SK-N-SH (cell line): ENCODE measurements at regions of chr7 and their contacts with region 1.

Region 1: GRCh38 chr7:92833024-92833765 is 3.2 kb downstream of the CDK6 start:
- DNase-seq: peak; percentile 90
- H3K4me3 ChIP-seq: peak overlapping the region; percentile 80 to 88
- H3K27ac ChIP-seq: peak overlapping the region; percentile 95 to 96
- H3K4me1 ChIP-seq: peaks cover 34 to 40% of the 10 kb centered on the region in 2 experiments; a peak in 3 of 4 replicates
- H3K27me3 ChIP-seq: no peaks in the 10 kb centered on the region
- CTCF ChIP-seq: peak; percentile 82
- EP300 ChIP-seq: peak in 1 of 2 experiments; percentile 24; a peak in 1 of 4 replicates
- RAD21 ChIP-seq: peak; percentile 84

Region 2: GRCh38 chr7:92576296-92576695 is 256.9 kb before region 1 on chr7:
- CTCF ChIA-PET with region 1: no interaction called
- POLR2A ChIA-PET with region 1: no interaction called
- DNase-seq: no peak
- H3K4me3 ChIP-seq: no peak overlapping the region
- H3K27ac ChIP-seq: no peak overlapping the region
- H3K4me1 ChIP-seq: no peaks in the 10 kb centered on the region
- H3K27me3 ChIP-seq: no peaks in the 10 kb centered on the region
- CTCF ChIP-seq: no peak
- EP300 ChIP-seq: no peak
- RAD21 ChIP-seq: no peak

Region 3: DNA sequence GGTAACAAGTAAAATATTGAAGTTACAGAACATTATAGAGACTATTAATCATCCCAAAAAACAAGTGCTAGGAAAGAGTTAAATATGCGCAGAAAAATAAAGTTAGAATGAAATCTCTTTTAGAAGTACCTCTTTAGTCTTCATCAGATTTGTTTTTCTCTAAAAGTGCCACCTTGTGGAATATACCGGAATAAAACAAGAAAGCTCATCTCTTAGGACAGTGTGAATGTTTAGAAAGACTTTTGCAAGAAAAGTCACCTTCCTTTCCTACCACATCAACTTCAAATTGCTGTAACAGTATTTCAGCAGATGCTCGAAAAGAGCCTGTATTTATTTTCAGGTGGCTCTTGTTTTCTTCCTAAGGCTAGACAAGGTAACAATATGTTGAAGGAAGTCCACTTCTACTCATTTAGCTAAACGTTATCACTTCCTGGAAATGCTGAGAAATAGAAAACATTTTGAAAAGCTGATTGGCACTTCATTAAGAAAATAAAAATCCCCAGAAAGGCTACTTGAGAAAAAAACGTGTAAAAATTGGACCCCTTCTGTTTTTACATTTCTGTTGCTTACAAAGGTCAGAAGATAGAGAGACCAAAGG is 223.2 kb before region 1 on chr7:
- CTCF ChIA-PET with region 1: interaction called, 96 read pairs
- POLR2A ChIA-PET with region 1: no interaction called
- DNase-seq: peak; percentile 43
- H3K4me3 ChIP-seq: no peak overlapping the region
- H3K27ac ChIP-seq: peak overlapping the region in 1 of 2 experiments; percentile 5; a peak in 1 of 4 replicates
- H3K4me1 ChIP-seq: peaks cover 6 to 25% of the 10 kb centered on the region in 2 experiments
- H3K27me3 ChIP-seq: no peaks in the 10 kb centered on the region
- CTCF ChIP-seq: peak; percentile 66
- EP300 ChIP-seq: no peak
- RAD21 ChIP-seq: peak; percentile 40

Region 4: GRCh38 chr7:92633211-92633906 is 199.8 kb before region 1 on chr7:
- CTCF ChIA-PET with region 1: interaction called, 24 read pairs
- POLR2A ChIA-PET with region 1: interaction called, 3 read pairs
- DNase-seq: no peak
- H3K4me3 ChIP-seq: peak overlapping the region; percentile 18 to 45; a peak in 3 of 4 replicates
- H3K27ac ChIP-seq: peak overlapping the region; percentile 93 to 98
- H3K4me1 ChIP-seq: peaks cover 39 to 47% of the 10 kb centered on the region in 2 experiments
- H3K27me3 ChIP-seq: no peaks in the 10 kb centered on the region
- CTCF ChIP-seq: no peak
- EP300 ChIP-seq: peak; percentile 83 to 98
- RAD21 ChIP-seq: no peak

Region 5: DNA sequence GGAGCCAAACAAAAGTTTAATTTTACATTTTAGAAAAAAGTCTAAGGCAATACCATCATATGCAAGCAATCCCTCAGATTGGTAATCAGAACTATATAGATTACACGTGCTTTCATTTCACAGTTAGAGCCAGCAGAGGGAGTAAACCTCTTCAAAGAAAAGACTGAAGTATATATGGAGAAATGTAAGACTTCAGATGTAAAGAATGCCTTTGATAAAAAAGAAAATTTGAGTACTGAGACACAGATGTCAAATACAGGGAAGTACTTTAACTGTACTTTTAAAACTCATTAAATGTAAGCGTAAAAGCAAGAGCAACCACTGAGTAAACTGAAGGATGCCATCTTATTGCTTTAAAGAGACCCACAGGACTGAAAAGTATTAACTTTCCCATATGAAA is 141.6 kb before region 1 on chr7:
- CTCF ChIA-PET with region 1: interaction called, 89 read pairs
- POLR2A ChIA-PET with region 1: no interaction called
- DNase-seq: peak; percentile 43
- H3K4me3 ChIP-seq: no peak overlapping the region
- H3K27ac ChIP-seq: peak overlapping the region in 1 of 2 experiments; percentile 58; a peak in 2 of 4 replicates
- H3K4me1 ChIP-seq: peaks cover 12 to 18% of the 10 kb centered on the region in 2 experiments
- H3K27me3 ChIP-seq: no peaks in the 10 kb centered on the region
- CTCF ChIP-seq: peak; percentile 82
- EP300 ChIP-seq: no peak
- RAD21 ChIP-seq: peak; percentile 87

Region 6: DNA sequence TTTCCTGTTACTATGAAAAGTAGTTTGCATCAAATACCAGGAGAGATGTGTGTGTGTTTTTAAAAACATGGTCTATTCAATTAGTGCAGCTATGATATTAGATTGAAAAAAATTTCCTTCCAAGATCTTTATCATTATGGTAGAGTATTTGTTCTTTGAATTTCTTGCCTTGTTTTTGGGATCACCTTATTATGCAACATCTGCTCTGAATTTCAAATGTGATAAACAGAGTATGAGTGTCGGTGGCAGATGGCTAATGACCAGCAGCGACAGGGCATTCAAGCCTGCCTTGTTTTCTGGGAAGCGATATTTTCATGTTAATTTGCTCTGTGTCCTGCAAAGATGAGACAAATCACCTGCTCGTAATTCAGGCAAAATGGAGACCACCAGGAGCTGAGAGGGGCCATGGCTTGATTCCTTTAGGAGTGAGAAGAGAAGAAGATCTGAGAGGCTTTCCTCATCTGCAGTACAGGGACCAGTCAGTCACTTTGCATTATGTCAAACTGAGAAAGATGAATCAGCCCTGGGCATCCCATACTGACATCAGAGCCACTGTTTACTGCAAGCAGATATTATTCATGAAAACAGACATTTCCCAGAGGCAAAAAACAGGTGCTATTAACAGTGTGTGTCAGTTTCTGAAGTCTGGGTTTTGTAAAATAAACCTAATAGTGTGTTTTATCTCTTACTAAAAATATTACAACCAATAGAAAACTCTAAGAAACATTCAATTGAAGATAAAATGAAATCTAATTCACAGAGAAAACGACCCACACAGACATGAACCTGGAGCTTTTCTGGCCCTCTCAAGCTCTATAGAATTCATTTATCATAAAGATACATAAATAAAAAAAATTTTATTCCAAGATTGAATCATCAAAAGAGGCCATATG is 64.4 kb before region 1 on chr7:
- CTCF ChIA-PET with region 1: interaction called, 73 read pairs
- POLR2A ChIA-PET with region 1: interaction called, 15 read pairs
- DNase-seq: peak; percentile 60
- H3K4me3 ChIP-seq: no peak overlapping the region
- H3K27ac ChIP-seq: peak overlapping the region; percentile 95 to 99
- H3K4me1 ChIP-seq: peaks cover 54 to 77% of the 10 kb centered on the region in 2 experiments
- H3K27me3 ChIP-seq: no peaks in the 10 kb centered on the region
- CTCF ChIP-seq: no peak
- EP300 ChIP-seq: peak; percentile 82 to 98; a peak in 3 of 4 replicates
- RAD21 ChIP-seq: no peak; the same call in 1 of the 2 replicates

Region 7: GRCh38 chr7:92778972-92779371 is 54.2 kb before region 1 on chr7:
- CTCF ChIA-PET with region 1: interaction called, 31 read pairs
- POLR2A ChIA-PET with region 1: interaction called, 3 read pairs
- DNase-seq: no peak
- H3K4me3 ChIP-seq: no peak overlapping the region
- H3K27ac ChIP-seq: peak overlapping the region in 1 of 2 experiments; percentile 50; a peak in 1 of 4 replicates
- H3K4me1 ChIP-seq: peaks cover 16 to 29% of the 10 kb centered on the region in 2 experiments; a peak in 3 of 4 replicates
- H3K27me3 ChIP-seq: no peaks in the 10 kb centered on the region
- CTCF ChIP-seq: no peak
- EP300 ChIP-seq: no peak
- RAD21 ChIP-seq: no peak

Region 8: GRCh38 chr7:92854501-92855238 is 21.5 kb after region 1 on chr7:
- CTCF ChIA-PET with region 1: interaction called, 10 read pairs
- POLR2A ChIA-PET with region 1: interaction called, 3 read pairs
- DNase-seq: no peak
- H3K4me3 ChIP-seq: no peak overlapping the region
- H3K27ac ChIP-seq: peak overlapping the region in 1 of 2 experiments; percentile 28; a peak in 1 of 4 replicates
- H3K4me1 ChIP-seq: no peaks in the 10 kb centered on the region; a peak in 1 of 4 replicates
- H3K27me3 ChIP-seq: no peaks in the 10 kb centered on the region
- CTCF ChIP-seq: no peak
- EP300 ChIP-seq: no peak
- RAD21 ChIP-seq: no peak